AG04449 (cell line): ENCODE measurements at regions of chr14 and their contacts with region 1.

Region 1: DNA sequence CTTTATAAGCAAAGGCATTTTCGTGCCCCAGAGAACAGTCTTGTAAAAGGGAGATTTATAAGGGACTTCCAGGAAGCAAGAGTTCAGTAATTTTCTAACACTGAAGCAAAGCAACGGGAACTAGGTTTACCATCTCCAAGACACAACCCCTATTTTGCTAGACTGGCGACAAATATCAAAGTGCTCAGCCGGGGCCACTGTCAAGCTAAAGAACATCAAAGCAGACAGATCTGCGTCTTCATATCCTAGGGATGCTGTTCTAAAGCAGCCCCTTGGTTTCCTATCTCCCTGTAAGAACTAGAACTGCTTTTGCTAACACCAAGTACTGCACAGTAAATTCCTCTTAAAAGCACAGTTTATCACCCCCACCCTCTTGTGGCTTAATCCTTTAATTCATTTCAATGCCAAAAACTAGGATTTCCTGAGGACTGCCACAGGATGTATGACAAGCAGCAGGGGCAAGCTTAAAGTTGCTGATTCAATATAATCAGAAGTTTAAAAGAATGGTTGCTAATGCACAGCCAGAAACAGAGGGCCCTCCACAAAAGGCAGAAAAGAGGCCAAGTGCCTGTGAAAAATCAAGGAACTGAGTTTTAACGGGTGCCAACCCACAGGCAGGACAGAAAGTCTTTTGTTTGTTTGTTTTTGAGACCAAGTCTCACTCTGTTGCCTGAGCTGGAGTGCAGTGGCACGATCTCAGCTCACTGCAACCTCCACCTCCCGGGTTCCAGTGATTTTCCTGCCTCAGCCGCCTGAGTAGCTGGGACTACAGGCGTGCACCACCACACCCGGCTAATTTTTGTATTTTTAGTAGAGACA is 44.0 kb upstream of the ISM2 start:
- DNase-seq: no peak
- H3K4me3 ChIP-seq: no peak overlapping the region
- CTCF ChIP-seq: no peak

Region 2: DNA sequence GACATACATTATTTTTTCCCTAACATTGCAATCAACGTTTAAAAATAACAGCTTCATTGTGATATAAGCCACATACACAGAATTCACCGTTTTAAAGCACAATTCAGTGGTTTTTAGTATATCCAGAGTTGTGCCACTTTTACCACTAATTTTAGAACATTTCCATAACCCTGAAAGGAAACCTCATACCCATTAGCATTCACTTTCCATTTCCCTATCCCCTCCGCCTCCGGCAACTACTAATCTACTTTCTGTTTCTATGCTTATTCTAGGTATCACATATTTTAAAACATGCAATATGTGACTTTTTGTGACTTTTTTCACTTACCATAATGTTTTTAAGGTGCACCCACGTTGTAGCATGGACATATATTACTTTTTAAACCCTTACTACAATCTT is 11.6 kb after region 1 on chr14:
- CTCF ChIA-PET with region 1: interaction called, 25 read pairs
- POLR2A ChIA-PET with region 1: no interaction called
- DNase-seq: no peak
- H3K4me3 ChIP-seq: no peak overlapping the region
- CTCF ChIP-seq: no peak

Region 3: DNA sequence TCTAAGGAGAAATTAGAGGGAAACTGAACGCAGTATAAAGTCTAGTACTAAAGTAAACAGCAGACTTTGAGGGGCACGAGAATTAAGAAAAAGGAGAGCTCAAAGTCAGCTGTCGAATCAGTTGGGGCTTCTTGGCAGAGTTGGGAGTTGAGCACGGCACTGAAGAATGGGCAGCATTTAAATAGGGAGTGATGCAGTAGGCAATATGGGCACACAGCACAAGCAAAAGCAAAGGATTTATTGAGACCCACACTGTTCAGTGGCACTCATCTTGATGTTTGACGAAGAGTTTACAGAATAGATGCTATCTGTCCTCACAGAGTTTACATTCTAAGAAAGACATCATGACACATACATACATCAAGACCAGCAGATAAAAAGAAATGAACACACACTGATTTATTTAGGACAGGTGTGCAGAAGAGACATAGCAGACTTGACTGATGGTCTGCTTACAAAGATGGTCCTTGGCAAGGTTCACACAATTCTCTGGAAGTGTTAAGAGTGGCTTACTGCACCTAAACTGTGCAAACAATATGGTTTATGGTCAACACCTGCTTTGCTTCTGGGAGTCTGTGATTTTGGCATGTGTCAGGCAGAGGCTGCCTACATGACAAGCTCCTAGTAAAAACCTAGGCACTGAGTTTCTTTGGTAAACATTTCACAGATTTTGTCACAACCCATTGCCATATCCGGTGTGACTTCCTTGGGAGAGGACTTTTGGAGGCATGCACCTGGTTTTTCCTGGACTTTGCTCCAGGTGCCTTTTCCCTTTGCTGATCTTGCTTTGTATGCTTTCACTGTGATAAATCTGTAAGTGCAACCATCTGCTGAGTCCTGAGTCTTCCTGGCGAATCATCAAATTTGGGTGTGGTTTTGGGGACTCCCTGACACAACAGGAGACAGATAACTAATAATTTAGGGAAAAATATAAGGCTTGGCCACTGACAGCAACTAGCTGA is 138.8 kb after region 1 on chr14:
- CTCF ChIA-PET with region 1: no interaction called
- POLR2A ChIA-PET with region 1: no interaction called
- DNase-seq: no peak
- H3K4me3 ChIP-seq: no peak overlapping the region
- CTCF ChIP-seq: no peak

Region 4: GRCh38 chr14:78509516-78509915 is 966.9 kb after region 1 on chr14:
- CTCF ChIA-PET with region 1: no interaction called
- POLR2A ChIA-PET with region 1: no interaction called
- DNase-seq: no peak
- H3K4me3 ChIP-seq: no peak overlapping the region
- CTCF ChIP-seq: no peak